Endothelial cell of umbilical vein (primary cell): ENCODE measurements at regions of chr20 and their contacts with region 1.

Region 1: DNA sequence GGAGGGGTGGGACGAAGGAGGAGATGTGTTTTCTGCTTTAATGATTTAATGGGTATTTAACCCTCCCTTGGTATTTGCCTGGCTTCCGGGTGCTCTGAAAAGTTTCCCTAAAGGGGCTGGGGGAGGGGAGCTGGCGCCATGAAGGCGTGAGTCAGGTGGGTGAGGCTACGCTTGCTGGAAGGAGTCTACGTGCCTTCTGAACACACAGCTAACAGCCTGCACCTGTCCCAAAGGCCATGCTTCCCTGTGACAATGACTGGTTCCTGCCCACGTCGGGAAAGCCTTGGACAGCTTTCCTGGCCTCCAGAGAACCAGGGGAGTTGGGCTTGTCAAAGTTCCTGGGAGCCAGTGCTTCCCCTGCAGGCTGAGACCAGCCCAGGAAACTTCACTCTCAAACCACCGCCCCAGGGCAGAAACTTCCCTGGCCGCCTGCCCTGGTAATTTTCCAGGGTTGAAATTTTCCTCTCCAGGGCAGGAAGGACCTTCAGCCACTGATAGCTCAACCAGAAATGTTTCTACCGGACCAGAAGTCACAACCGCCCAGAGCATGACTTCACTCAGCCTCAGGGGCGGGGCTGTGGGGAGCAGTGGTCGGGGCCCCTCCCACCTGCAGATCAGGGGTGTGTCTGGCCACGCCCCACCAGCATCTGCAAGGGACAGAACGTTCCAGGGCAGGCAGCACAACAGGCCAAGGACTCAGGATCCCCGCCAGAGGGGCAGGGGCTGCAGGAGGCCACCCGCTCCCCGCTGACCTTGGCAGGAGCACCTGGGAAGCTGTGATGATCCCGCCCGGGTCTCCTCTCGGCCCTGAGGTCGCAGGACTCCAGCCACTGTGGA is 18.6 kb upstream of the SLCO4A1 start:
- DNase-seq: peak; percentile 93
- H3K4me3 ChIP-seq: peak overlapping the region in 1 of 3 experiments; percentile 1
- H3K27ac ChIP-seq: peak overlapping the region; percentile 85
- H3K4me1 ChIP-seq: peaks cover 23% of the 10 kb centered on the region
- H3K27me3 ChIP-seq: no peaks in the 10 kb centered on the region
- CTCF ChIP-seq: no peak
- POLR2A ChIP-seq: peak; percentile 81

Region 2: DNA sequence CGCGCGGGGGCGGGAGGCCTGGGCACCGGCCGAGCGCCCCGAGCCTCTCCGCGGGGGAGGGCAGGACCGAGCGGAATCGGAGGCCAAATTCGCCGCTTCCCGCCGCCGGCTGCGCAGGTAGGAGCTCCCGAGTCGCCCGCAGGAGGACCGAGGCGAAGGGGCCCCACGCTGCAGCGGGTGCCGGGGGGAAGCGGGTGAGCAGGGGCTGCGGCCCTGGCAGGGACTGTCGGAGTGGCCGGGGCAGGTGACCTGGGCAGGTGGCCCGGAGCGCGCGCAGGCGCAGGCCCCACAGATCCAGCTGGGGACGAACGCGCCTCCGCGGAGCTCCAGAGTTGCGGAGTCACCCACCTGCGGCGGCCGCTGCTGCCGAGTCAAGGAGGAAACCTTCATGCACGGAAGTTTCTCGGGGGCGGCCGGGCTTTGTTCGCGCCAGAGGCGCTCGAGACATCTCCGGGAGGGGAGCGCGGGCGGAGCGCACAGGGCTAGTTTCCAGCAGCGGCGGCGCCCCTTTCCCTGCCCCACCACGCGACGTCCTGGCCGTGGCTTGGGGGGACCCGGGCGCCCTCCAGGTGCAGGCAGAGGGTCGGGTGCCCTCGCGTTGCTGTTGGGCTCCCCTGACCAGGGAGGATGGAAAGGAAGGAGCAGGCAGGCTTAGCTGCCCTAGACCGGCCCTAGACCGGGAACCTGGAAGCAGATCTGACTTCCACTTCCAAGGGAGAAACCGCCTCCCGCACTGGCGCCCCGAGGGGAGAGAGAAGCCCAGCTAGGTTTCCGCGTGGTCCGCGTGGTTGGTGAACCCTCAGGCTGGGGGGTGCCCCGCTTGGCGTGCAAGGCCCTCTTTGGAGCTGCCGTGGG is 19.2 kb after region 1 on chr20:
- CTCF ChIA-PET with region 1: interaction called, 4 read pairs
- POLR2A ChIA-PET with region 1: no interaction called
- dilution Hi-C with region 1: no loop called
- intact Hi-C with region 1: loop called (anchors 1 kb)
- DNase-seq: peak; percentile 27
- H3K4me3 ChIP-seq: peak overlapping the region; percentile 40 to 61 (median 45)
- H3K27ac ChIP-seq: no peak overlapping the region
- H3K4me1 ChIP-seq: peaks cover 4% of the 10 kb centered on the region
- H3K27me3 ChIP-seq: peaks cover 0 to 1% of the 10 kb centered on the region in 2 experiments
- CTCF ChIP-seq: no peak
- POLR2A ChIP-seq: no peak